ENCODE measurements at regions of chr1 and their contacts with region 1.

Region 1: DNA sequence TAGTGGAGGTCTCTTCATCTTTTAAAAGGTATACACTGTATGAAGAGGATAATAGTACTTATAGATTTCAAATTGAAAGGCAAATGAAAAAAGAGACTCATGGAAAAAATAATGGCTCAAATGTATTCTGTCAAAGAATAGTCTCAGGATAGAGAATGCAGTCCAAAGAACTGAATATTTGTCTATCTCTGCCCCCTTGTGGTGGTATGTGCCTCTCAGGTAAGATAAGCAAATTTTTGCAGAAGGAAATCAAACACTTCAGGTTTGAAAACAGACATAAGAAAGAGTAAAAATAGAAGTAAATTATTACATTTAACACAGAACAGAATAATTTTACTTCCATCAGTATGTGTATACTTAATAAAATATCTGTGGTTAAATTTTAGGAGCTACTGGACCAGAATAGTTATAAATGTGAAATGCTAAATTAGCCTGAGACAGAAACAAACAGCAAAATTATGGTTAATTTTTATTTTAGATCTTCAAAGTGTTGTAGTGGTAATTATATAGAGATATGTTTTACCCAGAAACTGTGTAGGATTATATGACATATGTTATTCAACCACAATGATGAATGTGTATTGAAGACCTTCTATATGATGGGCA is 164.4 kb upstream of the PALMD start:
- DNase-seq: no peak
- H3K4me3 ChIP-seq: no peak overlapping the region
- CTCF ChIP-seq: peak; percentile 58

Region 2: DNA sequence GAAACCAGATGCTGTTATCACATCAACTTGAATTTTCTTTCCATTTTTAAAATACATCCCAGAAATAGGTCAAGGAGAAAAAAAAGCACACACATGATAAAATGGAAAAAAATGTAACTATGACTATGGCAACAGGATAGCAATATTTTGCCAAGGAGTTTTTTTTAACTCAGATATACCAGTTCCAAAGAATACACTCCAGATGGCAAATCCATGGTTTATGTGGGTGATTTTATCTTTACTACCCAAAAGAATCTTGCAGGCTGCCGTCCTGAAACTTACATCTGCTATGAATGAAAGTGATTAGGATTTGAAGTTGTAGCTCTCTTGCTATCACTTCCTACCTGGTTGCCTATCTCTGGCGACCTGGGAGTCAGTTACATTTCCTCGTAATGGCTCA is 308.2 kb before region 1 on chr1:
- CTCF ChIA-PET with region 1: interaction called, 29 read pairs
- POLR2A ChIA-PET with region 1: no interaction called
- DNase-seq: no peak
- H3K4me3 ChIP-seq: no peak overlapping the region
- CTCF ChIP-seq: no peak

Region 3: GRCh38 chr1:99469550-99469971 is 11.9 kb before region 1 on chr1:
- CTCF ChIA-PET with region 1: interaction called, 76 read pairs
- POLR2A ChIA-PET with region 1: no interaction called
- DNase-seq: no peak
- H3K4me3 ChIP-seq: no peak overlapping the region
- CTCF ChIP-seq: no peak

Region 4: DNA sequence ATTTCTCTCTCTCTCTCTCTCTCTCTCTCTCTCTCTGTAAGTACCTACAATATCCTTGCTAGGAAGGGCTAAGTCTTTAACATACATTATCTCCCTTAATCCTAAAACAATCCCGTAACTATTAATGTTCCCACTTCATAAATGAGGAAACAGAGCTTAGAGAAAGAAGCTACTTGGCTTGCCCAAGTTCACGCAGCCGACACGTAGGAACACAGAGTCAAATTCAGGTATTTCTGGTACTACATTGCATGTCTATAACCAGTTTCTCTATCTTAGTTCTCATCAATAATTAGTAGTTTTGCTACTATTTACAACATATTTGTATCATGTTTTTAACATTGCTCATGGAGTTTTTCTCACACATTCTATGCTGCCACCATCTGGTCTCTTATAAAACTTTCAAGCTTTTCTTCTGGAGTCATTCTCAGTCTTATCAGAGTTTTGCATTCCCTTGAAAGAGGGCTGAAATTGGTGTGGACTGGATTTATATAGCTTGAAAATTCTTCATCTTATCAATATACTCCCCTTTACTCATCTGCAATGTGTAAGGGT is 45.5 kb after region 1 on chr1:
- CTCF ChIA-PET with region 1: interaction called, 14 read pairs
- POLR2A ChIA-PET with region 1: no interaction called
- DNase-seq: no peak
- H3K4me3 ChIP-seq: no peak overlapping the region
- CTCF ChIP-seq: peak; percentile 9

Region 5: GRCh38 chr1:99580451-99580850 is 99.0 kb after region 1 on chr1:
- CTCF ChIA-PET with region 1: no interaction called
- POLR2A ChIA-PET with region 1: no interaction called
- DNase-seq: no peak
- H3K4me3 ChIP-seq: no peak overlapping the region
- CTCF ChIP-seq: no peak

Region 6: GRCh38 chr1:99707535-99708142 is 226.1 kb after region 1 on chr1:
- CTCF ChIA-PET with region 1: interaction called, 30 read pairs
- POLR2A ChIA-PET with region 1: no interaction called
- DNase-seq: no peak
- H3K4me3 ChIP-seq: no peak overlapping the region
- CTCF ChIP-seq: peak; percentile 77

Region 7: GRCh38 chr1:99808391-99809115 is 327.1 kb after region 1 on chr1:
- CTCF ChIA-PET with region 1: no interaction called
- POLR2A ChIA-PET with region 1: no interaction called
- DNase-seq: peak; percentile 86
- H3K4me3 ChIP-seq: peak overlapping the region; percentile 6; the same call in 1 of the 2 replicates
- CTCF ChIP-seq: peak; percentile 23